ENCODE measurements at regions of chr1 and their contacts with region 1.

Region 1: GRCh38 chr1:99472893-99473292 is 173.0 kb upstream of the PALMD start:
- DNase-seq: no peak

Region 2: GRCh38 chr1:99170516-99170915 is 302.4 kb before region 1 on chr1:
- intact Hi-C with region 1: loop called (anchors 10 kb)
- DNase-seq: no peak

Measured in head of caudate nucleus (tissue), 42 donors.